Caco-2 (cell line): ENCODE measurements at regions of chr15 and their contacts with region 1.

Region 1: GRCh38 chr15:50828610-50829219 is 63.2 kb upstream of the SPPL2A start:
- DNase-seq: peak; percentile 74 to 79
- H3K4me3 ChIP-seq: no peak overlapping the region
- H3K4me3 Mint-ChIP-seq: peak overlapping the region; percentile 59
- H3K27ac Mint-ChIP-seq: peak overlapping the region; percentile 89
- H3K4me1 ChIP-seq: peaks cover 19% of the 10 kb centered on the region
- H3K4me1 Mint-ChIP-seq: peaks cover 15% of the 10 kb centered on the region
- H3K27me3 ChIP-seq: no peaks in the 10 kb centered on the region
- H3K27me3 Mint-ChIP-seq: no peaks in the 10 kb centered on the region
- CTCF ChIP-seq: peak in 1 of 2 experiments; percentile 21

Region 2: GRCh38 chr15:50476143-50476542 is 352.6 kb before region 1 on chr15:
- CTCF ChIA-PET with region 1: no interaction called
- POLR2A ChIA-PET with region 1: no interaction called
- intact Hi-C with region 1: no loop called
- DNase-seq: no peak
- H3K4me3 ChIP-seq: no peak overlapping the region
- H3K4me3 Mint-ChIP-seq: no peak overlapping the region
- H3K27ac Mint-ChIP-seq: no peak overlapping the region
- H3K4me1 ChIP-seq: no peaks in the 10 kb centered on the region
- H3K4me1 Mint-ChIP-seq: no peaks in the 10 kb centered on the region
- H3K27me3 ChIP-seq: no peaks in the 10 kb centered on the region
- H3K27me3 Mint-ChIP-seq: no peaks in the 10 kb centered on the region
- CTCF ChIP-seq: no peak

Region 3: DNA sequence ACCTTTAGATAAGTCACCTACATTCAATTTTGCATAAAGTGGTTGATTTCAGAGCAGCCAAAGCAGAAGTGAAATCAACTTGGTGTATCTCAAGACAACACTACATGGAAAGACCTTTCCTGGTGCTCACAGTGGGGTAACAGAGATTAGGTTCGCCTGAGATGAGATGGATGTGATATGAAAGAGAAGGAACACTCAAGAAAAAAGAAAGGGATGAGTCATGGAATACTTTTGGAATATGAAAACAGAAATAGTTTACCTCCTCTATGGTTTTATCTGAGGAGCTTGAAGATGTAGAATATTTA is 26.3 kb after region 1 on chr15:
- CTCF ChIA-PET with region 1: no interaction called
- POLR2A ChIA-PET with region 1: no interaction called
- intact Hi-C with region 1: loop called (anchors 2 kb)
- DNase-seq: no peak
- H3K4me3 ChIP-seq: no peak overlapping the region
- H3K4me3 Mint-ChIP-seq: no peak overlapping the region
- H3K27ac Mint-ChIP-seq: peak overlapping the region; percentile 78
- H3K4me1 ChIP-seq: peaks cover 39% of the 10 kb centered on the region
- H3K4me1 Mint-ChIP-seq: peaks cover 25% of the 10 kb centered on the region
- H3K27me3 ChIP-seq: no peaks in the 10 kb centered on the region
- H3K27me3 Mint-ChIP-seq: no peaks in the 10 kb centered on the region
- CTCF ChIP-seq: no peak